Colonic mucosa (tissue), 4 donors: ENCODE measurements at regions of chr18 and their contacts with region 1.

Region 1: DNA sequence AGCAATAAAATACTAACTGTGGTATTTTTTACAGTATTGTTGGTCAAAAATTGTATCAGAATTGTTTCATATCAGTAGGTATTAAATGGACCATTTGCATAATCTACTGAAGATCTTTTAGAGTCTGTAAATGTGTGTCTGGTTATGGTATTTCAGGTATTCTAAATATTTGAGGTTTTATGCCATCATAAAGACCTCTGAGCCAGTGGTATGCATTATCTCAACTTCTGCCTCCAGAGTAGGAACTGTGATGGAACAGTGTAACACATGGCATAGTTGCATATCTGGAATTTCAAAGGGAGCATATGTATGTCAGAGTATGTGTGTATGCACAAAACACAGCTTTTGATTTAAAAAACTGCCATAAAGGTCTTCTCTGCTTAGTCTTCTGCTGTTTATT is 15.4 kb downstream of the GREB1L start:
- DNase-seq: no peak
- H3K4me3 ChIP-seq: no peak overlapping the region
- H3K27ac ChIP-seq: no peak overlapping the region
- H3K4me1 ChIP-seq: no peaks in the 10 kb centered on the region
- H3K27me3 ChIP-seq: no peaks in the 10 kb centered on the region
- CTCF ChIP-seq: no peak

Region 2: DNA sequence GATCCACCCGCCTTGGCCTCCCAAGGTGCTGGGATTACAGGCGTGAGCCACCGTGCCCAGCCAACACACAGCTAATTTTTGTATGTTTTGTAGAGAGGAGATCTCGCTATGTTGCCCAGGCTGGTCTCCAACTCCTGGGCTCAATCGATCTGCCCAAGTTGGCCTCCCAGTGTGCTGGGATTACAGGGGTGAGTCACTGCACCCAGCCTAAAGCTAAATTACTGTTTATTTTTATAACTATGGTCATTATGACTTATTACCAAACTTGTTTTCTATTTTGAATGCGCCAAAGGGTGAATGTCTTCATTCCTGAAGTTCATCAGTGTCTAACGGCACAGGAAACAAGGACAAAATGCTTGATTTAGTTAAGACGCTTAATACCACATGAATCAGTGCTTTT is 54.3 kb before region 1 on chr18:
- intact Hi-C with region 1: loop called (anchors 10 kb)
- DNase-seq: no peak
- H3K4me3 ChIP-seq: no peak overlapping the region
- H3K27ac ChIP-seq: no peak overlapping the region
- H3K4me1 ChIP-seq: no peaks in the 10 kb centered on the region
- H3K27me3 ChIP-seq: no peaks in the 10 kb centered on the region
- CTCF ChIP-seq: no peak